Activated naive CD4-positive, alpha-beta T cell treated with anti-CD3 and anti-CD28 coated beads for 36 hours (primary cell): ENCODE measurements at regions of chr11 and their contacts with region 1.

Region 1: DNA sequence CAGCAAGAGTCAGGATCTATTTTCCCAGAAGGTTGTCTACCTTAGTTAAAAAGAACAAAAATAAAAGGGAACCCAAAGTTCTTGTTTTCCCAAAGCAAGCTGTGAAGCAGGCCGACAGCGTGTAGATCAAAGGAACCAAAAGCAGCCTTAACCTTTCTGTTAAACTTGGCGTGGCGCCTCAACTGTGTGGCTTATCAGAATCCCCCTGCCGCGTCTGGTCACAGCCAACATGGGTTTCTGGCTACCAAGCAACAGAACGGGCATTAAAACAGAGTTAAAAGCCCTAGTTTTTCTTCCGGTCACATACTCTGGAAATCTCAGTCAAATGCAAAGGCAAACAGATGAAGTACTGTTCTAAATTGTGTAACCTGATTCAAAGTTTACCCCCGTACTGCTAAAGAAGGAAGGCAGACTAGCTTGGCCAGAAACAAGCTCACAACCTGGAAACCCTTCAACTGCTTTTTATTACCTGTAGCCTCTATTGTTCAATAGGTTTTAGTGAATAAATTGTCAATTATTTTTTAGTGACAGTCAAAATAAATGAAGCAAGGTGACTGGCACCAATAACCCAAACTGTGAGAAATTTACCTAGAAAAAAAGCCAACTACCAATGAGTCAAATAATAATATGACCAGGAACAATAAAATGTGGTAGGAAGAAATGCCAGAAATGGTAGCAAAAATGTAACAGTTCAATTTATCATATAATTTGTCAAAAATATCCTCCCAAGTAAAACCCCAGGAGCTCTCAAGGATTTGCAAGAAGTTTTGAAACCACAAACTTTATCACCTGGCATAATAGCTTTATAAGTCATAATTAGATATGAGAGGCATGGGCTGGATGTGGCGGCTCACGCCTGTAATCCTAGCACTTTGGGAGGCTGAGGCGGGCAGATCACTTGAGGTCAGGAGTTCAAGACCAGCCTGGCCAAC is 21.4 kb downstream of the CHKA start:
- DNase-seq: peak; percentile 74
- H3K4me3 Mint-ChIP-seq: peak overlapping the region; percentile 52
- H3K27ac Mint-ChIP-seq: no peak overlapping the region
- H3K4me1 Mint-ChIP-seq: peaks cover 17% of the 10 kb centered on the region
- H3K27me3 Mint-ChIP-seq: no peaks in the 10 kb centered on the region

Region 2: GRCh38 chr11:68142028-68142412 is 42.3 kb after region 1 on chr11:
- CTCF ChIA-PET with region 1: no interaction called
- intact Hi-C with region 1: loop called (anchors 1 kb)
- DNase-seq: peak; percentile 79
- H3K4me3 Mint-ChIP-seq: no peak overlapping the region
- H3K27ac Mint-ChIP-seq: peak overlapping the region; percentile 61
- H3K4me1 Mint-ChIP-seq: peaks cover 11% of the 10 kb centered on the region
- H3K27me3 Mint-ChIP-seq: no peaks in the 10 kb centered on the region